Lower leg skin (tissue), 4 donors: ENCODE measurements at regions of chr11 and their contacts with region 1.

Region 1: GRCh38 chr11:87290304-87290922 is 252.7 kb downstream of the TMEM135 start:
- DNase-seq: no peak
- H3K4me3 ChIP-seq: no peak overlapping the region
- CTCF ChIP-seq: no peak
- POLR2A ChIP-seq: no peak

Region 2: GRCh38 chr11:86938900-86939880 is 351.2 kb before region 1 on chr11:
- intact Hi-C with region 1: loop called (anchors 5 kb)
- DNase-seq: no peak
- H3K4me3 ChIP-seq: no peak overlapping the region
- CTCF ChIP-seq: no peak
- POLR2A ChIP-seq: no peak

Region 3: DNA sequence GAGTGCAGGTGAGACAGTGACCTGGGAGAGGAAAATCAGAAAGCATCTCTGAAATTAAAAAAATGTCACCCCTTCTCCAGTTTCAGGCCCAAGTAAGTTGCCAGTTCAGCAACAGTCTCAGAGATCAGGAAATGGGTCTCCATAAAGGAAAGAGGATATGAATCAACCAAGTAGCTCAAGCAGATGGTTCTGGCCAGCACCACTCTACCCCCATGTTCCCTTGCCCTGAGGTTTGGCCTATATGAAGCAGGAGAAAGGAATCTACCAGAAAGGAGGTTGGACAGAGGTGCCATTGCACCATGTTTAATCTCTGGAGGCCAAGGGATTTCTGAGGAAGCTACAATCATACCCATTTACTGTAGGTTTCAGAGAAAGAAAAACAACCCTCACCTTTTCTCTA is 342.9 kb before region 1 on chr11:
- intact Hi-C with region 1: loop called (anchors 5 kb)
- DNase-seq: no peak
- H3K4me3 ChIP-seq: no peak overlapping the region
- CTCF ChIP-seq: no peak
- POLR2A ChIP-seq: no peak

Region 4: DNA sequence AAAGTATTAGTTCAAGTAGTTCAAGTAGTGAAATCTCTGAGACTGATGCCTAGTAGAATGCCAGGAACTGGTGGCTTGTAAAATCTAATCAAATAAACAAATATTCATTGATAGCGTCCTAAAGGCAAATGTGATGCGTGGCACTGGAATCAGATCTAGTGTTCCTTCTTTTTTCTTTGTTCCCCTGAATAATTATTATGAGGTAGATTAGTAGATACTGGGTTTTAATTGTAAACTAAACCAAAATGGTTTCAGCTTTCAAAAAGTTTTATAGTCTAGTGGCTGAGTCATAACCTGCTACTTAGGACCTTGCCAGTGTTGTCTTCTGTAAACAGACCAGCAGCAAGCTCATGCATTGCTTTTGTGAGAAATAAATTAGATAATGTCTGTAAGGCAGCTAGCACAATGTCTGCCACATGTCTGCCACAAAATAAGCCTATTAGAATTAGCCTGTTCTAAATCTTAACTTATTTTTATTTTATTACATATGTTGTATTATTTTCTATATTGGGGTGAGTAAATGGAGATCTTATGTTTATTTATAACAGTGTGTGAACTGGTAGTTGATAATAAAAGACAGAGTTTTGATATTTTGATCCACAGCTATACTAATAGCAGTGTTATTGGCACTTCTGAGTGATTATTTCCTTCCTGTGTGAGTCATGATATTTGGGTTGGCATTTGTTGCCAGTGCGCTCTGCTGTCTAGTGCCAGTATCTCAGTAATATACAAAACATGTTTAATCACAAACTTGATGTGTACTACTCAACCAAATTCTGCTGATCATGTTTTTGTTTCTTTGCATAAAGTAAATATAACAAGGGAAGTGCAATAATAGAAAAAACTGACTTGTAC is 117.0 kb before region 1 on chr11:
- intact Hi-C with region 1: no loop called
- DNase-seq: no peak
- H3K4me3 ChIP-seq: no peak overlapping the region
- CTCF ChIP-seq: no peak
- POLR2A ChIP-seq: no peak

Region 5: GRCh38 chr11:87193756-87194470 is 96.5 kb before region 1 on chr11:
- intact Hi-C with region 1: no loop called
- DNase-seq: no peak
- H3K4me3 ChIP-seq: no peak overlapping the region
- CTCF ChIP-seq: no peak
- POLR2A ChIP-seq: no peak